Cardiac septum (tissue), 1 donor: ENCODE measurements at regions of chr10 and their contacts with region 1.

Region 1: DNA sequence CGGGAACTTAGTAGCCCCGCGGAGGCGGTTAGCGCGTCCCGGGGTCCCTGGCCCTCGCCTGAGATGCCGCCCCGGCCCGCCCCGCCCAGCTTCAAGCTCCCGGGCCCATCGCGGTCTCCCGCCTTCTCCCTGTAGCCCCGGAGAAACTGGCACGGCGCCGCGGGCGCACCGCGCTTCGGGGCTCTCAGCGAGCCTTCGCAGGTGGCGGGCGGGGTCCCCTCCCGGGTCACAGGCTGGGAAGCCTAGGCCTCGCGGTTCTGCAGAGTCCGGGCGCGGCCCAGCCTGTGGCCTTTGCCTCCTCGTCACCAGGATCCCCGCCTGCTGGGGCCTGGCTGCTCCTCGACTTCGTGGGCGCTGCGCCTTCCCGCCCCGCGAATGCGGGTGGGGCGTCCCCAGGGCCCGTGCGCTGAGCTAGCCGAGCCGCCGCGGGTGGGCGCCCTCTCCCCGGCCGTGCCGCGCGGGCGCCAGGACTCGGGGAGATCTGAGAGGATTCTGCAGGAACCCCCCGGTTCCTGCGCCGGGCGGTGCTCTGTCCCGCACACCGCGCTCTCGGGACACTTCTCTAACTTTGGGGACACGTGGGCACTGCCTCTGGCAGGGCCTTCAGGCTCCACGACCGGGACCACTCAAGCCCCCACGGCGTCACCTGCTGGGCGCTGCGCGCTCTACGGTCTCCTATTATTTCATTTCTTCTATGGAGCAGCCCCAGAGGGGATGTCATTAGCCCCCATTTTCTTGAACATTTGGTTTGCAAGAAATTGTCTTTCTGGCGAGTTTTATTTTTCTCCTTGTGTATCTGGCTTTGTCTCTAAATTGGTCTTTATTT is 682 bp upstream of the RGS10 start:
- DNase-seq: no peak

Region 2: DNA sequence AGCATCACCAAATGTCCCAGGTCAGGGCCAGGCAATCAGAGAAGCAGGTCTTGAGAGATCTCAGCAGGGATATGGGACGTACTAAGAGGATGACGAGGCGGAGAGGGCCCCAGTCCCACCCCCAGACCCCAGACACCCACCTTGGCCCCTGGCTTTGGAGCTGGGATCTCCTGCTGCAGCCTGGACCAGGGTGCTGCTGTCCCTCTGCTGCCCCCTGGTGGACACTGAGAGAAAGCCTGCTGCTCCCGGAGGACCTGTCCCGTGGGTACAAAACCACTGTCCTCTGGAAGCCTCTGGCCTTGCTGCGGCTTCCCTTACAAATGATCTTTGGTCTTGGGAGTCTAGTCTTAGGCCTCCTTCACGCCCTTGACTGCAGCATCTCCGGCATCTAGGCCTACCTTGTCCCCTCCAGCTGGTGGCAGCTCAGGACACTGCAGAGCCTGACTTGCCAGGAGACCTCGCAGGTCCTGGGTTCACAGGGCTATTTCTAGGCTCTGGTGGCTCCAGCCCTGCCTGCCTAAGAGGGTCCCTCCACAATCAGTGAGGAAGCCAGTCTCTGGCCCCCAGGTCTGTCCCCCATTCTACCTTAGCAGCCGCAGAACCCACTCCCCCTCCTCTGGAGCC is 97.8 kb before region 1 on chr10:
- intact Hi-C with region 1: loop called (anchors 10 kb)
- DNase-seq: peak; percentile 95